ENCODE measurements at regions of chr2 and their contacts with region 1.

Region 1: GRCh38 chr2:200963124-200963917 is at the start of gene ORC2:
- DNase-seq: peak; percentile 93
- H3K4me3 Mint-ChIP-seq: peak within 1 kb of the TSS; percentile 92
- H3K27ac Mint-ChIP-seq: peak within 1 kb of the TSS; percentile 86
- H3K4me1 Mint-ChIP-seq: peaks cover 72% of the 10 kb centered on the region
- H3K27me3 Mint-ChIP-seq: no peaks in the 10 kb centered on the region
- total RNA-seq, gene ORC2: 50.8 to 51.6 TPM

Region 2: GRCh38 chr2:200635251-200635650 is 328.1 kb before region 1 on chr2:
- CTCF ChIA-PET with region 1: no interaction called
- POLR2A ChIA-PET with region 1: no interaction called
- DNase-seq: no peak
- H3K4me3 Mint-ChIP-seq: no peak overlapping the region
- H3K27ac Mint-ChIP-seq: no peak overlapping the region
- H3K4me1 Mint-ChIP-seq: no peaks in the 10 kb centered on the region
- H3K27me3 Mint-ChIP-seq: peaks cover 30% of the 10 kb centered on the region

Region 3: GRCh38 chr2:200747668-200748618 is 215.4 kb before region 1 on chr2:
- CTCF ChIA-PET with region 1: no interaction called
- POLR2A ChIA-PET with region 1: no interaction called
- DNase-seq: no peak
- H3K4me3 Mint-ChIP-seq: no peak overlapping the region
- H3K27ac Mint-ChIP-seq: no peak overlapping the region
- H3K4me1 Mint-ChIP-seq: no peaks in the 10 kb centered on the region
- H3K27me3 Mint-ChIP-seq: peaks cover 13% of the 10 kb centered on the region

Region 4: DNA sequence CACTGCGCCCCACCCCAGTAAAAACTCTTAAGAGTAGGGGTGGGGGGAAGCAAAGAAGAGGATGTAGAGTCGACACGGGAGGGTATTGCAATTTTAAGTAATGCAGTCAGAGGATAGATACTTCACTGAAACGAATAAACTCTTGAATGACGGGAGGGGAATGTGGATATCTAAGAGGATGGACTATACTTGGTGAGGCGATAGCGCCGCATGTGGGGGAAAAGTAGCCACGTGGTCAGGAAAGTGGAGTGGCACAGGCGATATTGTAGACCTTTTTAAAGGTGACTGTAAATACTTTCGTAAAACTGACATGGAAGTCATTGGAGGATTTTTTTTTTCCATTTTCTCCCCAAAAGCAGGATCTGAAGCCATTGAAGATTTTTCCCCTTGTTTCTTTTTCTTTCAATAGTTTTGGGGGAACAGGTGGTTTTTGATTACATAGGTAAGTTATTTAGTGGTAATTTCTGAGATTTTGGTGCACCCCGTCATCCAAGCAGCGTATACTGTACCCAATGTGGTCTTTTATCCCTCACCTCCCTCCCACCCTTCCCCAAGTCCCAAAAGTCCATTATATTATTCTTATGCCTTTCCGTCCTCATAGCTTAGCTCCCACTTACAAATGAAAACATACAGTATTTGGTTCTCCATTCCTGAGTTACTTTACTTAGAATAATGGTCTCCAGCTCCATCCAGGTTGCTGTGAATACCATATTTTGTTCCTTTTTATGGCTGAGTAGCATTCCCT is 112.6 kb before region 1 on chr2:
- CTCF ChIA-PET with region 1: no interaction called
- POLR2A ChIA-PET with region 1: no interaction called
- DNase-seq: no peak
- H3K4me3 Mint-ChIP-seq: no peak overlapping the region
- H3K27ac Mint-ChIP-seq: no peak overlapping the region
- H3K4me1 Mint-ChIP-seq: peaks cover 2% of the 10 kb centered on the region
- H3K27me3 Mint-ChIP-seq: no peaks in the 10 kb centered on the region

Region 5: GRCh38 chr2:200901459-200902072 is 61.8 kb before region 1 on chr2:
- CTCF ChIA-PET with region 1: interaction called, 15 read pairs
- POLR2A ChIA-PET with region 1: interaction called, 4 read pairs
- DNase-seq: peak; percentile 81
- H3K4me3 Mint-ChIP-seq: no peak overlapping the region
- H3K27ac Mint-ChIP-seq: peak overlapping the region; percentile 53
- H3K4me1 Mint-ChIP-seq: peaks cover 32% of the 10 kb centered on the region
- H3K27me3 Mint-ChIP-seq: no peaks in the 10 kb centered on the region

Region 6: DNA sequence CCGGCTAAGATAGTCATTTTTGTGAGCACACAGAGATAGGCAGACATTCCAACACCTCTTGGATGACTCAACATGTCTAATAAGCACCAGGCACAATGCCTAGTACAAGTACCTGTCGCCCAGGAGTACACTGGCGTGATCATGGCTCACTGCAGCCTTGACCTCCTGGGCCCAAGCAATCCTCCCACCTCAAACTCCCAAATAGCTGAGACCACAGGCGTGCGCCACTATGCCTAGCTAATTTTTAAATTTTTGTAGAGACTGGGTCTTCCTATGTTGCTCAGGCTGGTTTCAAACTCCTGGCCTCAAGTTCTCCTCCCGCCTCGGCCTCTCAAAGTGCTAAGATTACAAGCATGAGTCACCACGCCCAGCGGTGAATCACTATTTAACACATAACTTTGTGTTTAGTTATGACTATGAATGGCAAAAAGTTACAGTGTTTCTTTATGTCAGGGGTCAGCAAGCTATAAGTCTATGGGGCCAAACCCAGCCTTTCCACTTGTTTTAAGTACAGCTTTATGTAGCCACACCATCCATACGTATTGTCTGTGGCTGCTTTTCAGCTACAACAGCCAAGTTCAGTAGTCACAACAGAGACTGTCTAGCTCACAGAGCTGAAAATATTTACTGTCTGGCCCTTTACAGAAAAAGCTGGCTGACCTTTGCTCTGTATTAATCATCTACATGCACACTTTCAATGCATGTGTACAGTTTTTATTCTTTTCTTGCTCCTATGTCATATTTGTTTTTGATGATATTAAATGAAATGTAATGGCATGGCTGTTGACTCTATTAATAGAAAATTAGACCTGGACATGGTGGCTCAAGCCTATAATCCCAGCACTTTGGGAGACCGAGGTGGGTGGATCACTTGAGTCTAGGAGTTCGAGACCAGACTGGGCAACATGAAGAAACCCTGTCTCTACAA is 18.6 kb before region 1 on chr2:
- CTCF ChIA-PET with region 1: interaction called, 11 read pairs
- POLR2A ChIA-PET with region 1: interaction called, 17 read pairs
- DNase-seq: peak; percentile 66
- H3K4me3 Mint-ChIP-seq: no peak overlapping the region
- H3K27ac Mint-ChIP-seq: peak overlapping the region; percentile 31
- H3K4me1 Mint-ChIP-seq: peaks cover 28% of the 10 kb centered on the region
- H3K27me3 Mint-ChIP-seq: no peaks in the 10 kb centered on the region

Region 7: GRCh38 chr2:200985799-200986198 is 22.5 kb after region 1 on chr2:
- CTCF ChIA-PET with region 1: interaction called, 19 read pairs
- POLR2A ChIA-PET with region 1: interaction called, 17 read pairs
- DNase-seq: no peak
- H3K4me3 Mint-ChIP-seq: no peak overlapping the region
- H3K27ac Mint-ChIP-seq: no peak overlapping the region
- H3K4me1 Mint-ChIP-seq: no peaks in the 10 kb centered on the region
- H3K27me3 Mint-ChIP-seq: no peaks in the 10 kb centered on the region

Region 8: GRCh38 chr2:201071479-201072200 is 108.3 kb after region 1 on chr2 and contains the starts of genes HYCC2 and NDUFB3:
- CTCF ChIA-PET with region 1: interaction called, 54 read pairs
- POLR2A ChIA-PET with region 1: interaction called, 20 read pairs
- DNase-seq: peak; percentile 95
- H3K4me3 Mint-ChIP-seq: peak within 1 kb of the TSS; percentile 96
- H3K27ac Mint-ChIP-seq: peak within 1 kb of the TSS; percentile 88
- H3K4me1 Mint-ChIP-seq: peaks cover 57% of the 10 kb centered on the region
- H3K27me3 Mint-ChIP-seq: no peaks in the 10 kb centered on the region
- total RNA-seq, gene HYCC2: 27.9 to 31.9 TPM
- total RNA-seq, gene NDUFB3: 133 to 135 TPM

Region 9: DNA sequence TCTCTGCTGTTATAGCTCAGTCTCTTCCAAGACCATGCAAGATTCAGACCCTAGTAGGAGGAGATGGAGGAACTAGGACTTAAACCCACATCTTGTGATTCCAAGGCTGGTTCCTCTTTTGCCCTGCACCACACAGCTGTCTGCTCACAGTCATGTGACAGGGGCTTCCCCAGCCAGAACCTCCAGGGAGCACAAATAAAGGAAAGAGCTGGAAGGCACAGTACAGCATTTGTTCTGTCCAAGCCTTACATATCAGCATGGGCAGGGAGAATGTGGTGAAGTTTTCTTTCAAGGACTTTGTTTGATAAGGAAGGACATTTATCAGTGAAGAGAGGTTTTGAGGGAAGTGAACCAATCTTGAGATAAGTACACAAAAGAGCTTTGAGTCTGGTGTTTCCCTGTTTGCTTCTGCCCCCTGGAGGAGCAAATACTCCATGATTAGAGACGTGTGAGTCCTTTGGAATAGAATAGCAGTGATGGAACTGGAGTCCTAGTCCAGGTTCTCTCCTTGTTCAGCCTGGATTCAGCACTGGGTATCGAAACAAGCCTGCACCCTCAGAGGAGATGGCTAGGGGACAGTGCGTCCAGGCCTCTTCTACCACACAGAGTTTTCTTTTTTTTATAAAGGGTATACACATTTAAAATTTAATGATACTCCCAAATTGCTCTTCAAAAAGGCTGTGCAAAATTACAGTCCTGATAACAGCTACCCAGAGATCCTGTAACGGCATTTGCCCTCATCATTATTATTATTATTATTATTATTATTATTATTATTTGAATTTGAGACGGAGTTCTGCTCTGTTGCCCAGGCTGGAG is 195.0 kb after region 1 on chr2:
- CTCF ChIA-PET with region 1: interaction called, 12 read pairs
- POLR2A ChIA-PET with region 1: interaction called, 3 read pairs
- DNase-seq: peak; percentile 63
- H3K4me3 Mint-ChIP-seq: no peak overlapping the region
- H3K27ac Mint-ChIP-seq: peak overlapping the region; percentile 50
- H3K4me1 Mint-ChIP-seq: peaks cover 15% of the 10 kb centered on the region
- H3K27me3 Mint-ChIP-seq: no peaks in the 10 kb centered on the region

Measured in activated CD4-positive, alpha-beta memory T cell treated with anti-CD3 and anti-CD28 coated beads, Interleukin-2, amount 10 ng/mL, durations not matched to agents 7 days and 5 days (primary cell).